ENCODE measurements at regions of chr11 and their contacts with region 1.

Region 1: DNA sequence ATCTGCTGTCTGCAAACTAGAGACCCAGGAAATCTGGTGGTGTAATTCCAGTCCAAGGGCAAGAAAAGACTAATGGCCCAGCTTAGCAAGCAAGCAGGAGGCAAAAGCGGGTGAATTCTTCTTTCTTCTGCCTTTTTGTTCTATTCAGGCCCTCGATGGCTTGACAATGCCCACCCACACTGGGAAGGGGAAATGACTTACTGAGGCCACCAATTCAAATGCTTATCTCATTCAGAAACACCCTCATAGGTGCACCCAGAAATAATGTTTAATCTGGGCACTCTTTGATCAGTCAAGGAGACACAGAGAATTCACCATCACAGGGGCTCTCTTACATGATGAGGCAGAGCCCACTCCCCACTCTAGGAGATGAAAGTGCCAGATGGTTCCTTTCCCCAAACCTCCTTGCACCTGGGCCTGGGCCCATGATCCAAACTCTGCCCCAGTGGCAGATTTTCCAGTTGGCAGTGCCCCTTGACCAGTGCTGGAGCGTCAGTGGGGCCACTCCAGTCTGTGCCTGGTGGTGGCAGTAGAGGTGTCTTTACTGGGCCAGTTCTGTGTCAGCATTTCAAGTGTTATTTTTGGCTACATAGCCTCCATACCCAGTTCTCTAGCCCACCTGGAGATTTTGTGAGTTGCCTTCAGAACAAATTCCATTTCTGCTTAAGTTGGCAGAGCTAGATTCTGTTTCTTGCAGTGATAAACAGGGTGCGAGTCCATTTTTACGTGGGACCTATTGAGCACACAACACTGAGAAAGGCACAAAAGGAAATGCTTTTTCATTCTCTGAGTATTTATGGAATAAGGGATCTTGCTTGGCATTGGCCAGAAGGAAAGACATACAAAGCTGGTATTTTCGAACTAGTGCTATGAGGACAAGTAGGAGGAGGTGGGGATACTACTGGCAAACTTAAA is 7.5 kb downstream of the ELMOD1 start:
- DNase-seq: peak in 1 of 2 experiments; percentile 69
- H3K4me3 ChIP-seq: no peak overlapping the region
- H3K27ac ChIP-seq: no peak overlapping the region
- H3K4me1 ChIP-seq: peaks cover 0 to 9% (median 4%) of the 10 kb centered on the region in 4 experiments; a peak in 4 of 7 replicates
- H3K27me3 ChIP-seq: peaks cover 0 to 6% (median 4%) of the 10 kb centered on the region in 4 experiments; a peak in 3 of 7 replicates
- CTCF ChIP-seq: peak; percentile 76 to 79 (median 77)
- EP300 ChIP-seq: no peak
- POLR2A ChIP-seq: no peak
- RAD21 ChIP-seq: peak; percentile 70 to 80

Region 2: DNA sequence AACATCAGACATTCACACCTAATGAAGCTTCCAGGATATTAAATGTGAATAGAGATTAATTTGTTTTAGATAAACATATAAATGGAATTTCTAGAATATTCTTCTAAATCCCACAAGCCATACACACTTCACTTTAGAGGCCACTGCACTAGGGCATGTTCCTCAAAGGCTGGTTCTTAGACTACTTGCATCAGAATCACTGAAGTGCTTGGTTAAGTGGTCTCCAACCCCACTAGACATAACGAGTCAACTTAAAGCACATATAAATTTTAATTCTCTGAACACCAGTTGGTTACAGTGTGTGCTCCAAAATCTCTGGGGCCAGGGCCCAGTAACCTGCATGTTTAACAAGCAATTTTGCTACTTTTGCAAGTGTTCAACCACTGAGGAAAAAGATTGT is 25.0 kb before region 1 on chr11:
- CTCF ChIA-PET with region 1: interaction called, 40 read pairs
- POLR2A ChIA-PET with region 1: no interaction called
- DNase-seq: no peak
- H3K4me3 ChIP-seq: no peak overlapping the region
- H3K27ac ChIP-seq: no peak overlapping the region
- H3K4me1 ChIP-seq: peaks cover 0 to 4% (median 2%) of the 10 kb centered on the region in 4 experiments; a peak in 1 of 7 replicates
- H3K27me3 ChIP-seq: no peaks in the 10 kb centered on the region
- CTCF ChIP-seq: no peak
- EP300 ChIP-seq: no peak
- POLR2A ChIP-seq: no peak
- RAD21 ChIP-seq: no peak

Region 3: GRCh38 chr11:107583629-107584195 is 14.8 kb before region 1 on chr11:
- CTCF ChIA-PET with region 1: interaction called, 40 read pairs
- POLR2A ChIA-PET with region 1: no interaction called
- DNase-seq: no peak
- H3K4me3 ChIP-seq: no peak overlapping the region
- H3K27ac ChIP-seq: no peak overlapping the region
- H3K4me1 ChIP-seq: peaks cover 0 to 4% (median 0%) of the 10 kb centered on the region in 4 experiments; a peak in 1 of 7 replicates
- H3K27me3 ChIP-seq: peaks cover 0 to 6% (median 5%) of the 10 kb centered on the region in 4 experiments; a peak in 4 of 7 replicates
- CTCF ChIP-seq: no peak
- EP300 ChIP-seq: no peak
- POLR2A ChIP-seq: no peak
- RAD21 ChIP-seq: no peak